Endothelial cell of umbilical vein (primary cell): ENCODE measurements at regions of chr2 and their contacts with region 1.

Region 1: DNA sequence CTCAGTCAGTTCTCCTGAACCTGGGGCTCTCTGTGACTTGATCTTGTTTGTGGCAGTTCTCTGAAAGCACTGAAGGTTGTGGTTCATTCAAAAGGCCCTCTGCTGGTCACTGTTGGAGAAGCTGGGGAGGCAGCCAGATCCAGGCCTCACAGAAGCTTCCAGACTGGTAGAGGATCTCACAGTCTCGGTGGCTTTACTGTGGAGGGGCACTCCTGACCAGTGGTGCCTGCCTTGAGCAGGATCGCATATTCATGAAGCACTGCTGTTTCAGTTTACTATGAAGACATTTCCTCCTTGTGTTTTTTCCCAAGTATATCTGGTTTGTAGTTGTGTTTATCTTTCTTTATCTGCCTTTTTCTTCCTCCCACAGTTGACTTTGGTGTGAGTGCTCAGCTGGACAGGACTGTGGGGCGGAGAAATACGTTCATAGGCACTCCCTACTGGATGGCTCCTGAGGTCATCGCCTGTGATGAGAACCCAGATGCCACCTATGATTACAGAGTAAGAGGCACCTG is 133.9 kb downstream of the MAP4K4 start:
- DNase-seq: peak; percentile 85
- H3K4me3 ChIP-seq: no peak overlapping the region
- H3K27ac ChIP-seq: peak overlapping the region; percentile 18
- H3K4me1 ChIP-seq: peaks cover 33% of the 10 kb centered on the region
- H3K27me3 ChIP-seq: no peaks in the 10 kb centered on the region
- CTCF ChIP-seq: peak; percentile 68 to 74
- POLR2A ChIP-seq: no peak

Region 2: DNA sequence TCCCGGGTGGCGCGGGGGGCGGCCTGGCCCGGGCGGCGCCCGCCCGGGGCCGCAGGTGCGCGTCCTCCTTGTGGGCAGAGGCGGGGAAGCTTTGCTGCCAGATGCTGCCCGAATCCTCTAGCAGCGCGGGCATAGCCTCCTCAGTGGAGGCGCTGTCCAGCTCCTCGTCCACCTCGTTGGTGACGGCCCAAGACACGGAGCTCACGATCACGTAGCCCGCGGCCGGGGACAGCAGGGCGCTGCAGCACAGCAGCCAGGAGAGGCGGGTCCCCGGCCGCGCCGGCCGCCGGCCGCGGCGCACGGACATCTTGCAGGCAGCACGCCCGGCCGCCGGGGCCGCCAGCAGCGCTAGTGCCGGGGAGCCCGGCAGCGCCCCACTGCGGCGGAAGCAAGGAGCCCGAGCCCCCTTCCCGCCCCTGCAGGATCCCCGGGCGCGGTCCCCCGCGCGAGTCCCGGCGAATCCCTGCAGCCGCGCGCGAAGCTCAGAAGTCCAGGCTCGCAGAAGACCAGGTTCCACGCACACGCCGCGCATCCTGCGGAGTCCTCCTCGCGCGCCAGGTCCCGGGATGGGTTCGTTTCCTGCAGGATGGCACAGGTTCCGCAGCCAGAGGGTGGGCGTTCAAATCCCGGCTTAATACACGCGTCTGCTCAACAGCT is 444.1 kb before region 1 on chr2 and contains the start of gene CREG2:
- CTCF ChIA-PET with region 1: interaction called, 13 read pairs
- POLR2A ChIA-PET with region 1: no interaction called
- dilution Hi-C with region 1: no loop called
- intact Hi-C with region 1: no loop called
- DNase-seq: peak; percentile 74
- H3K4me3 ChIP-seq: peak within 1 kb of the TSS; percentile 32 to 54 (median 43)
- H3K27ac ChIP-seq: no peak within 1 kb of the TSS
- H3K4me1 ChIP-seq: peaks cover 19% of the 10 kb centered on the region
- H3K27me3 ChIP-seq: peaks cover 36 to 46% of the 10 kb centered on the region in 2 experiments
- CTCF ChIP-seq: peak; percentile 53 to 61
- POLR2A ChIP-seq: no peak
- total RNA-seq, gene CREG2: 0.88 and 2.0 TPM in 2 replicates

Region 3: GRCh38 chr2:101518578-101519492 is 312.6 kb before region 1 on chr2:
- CTCF ChIA-PET with region 1: interaction called, 21 read pairs
- POLR2A ChIA-PET with region 1: no interaction called
- dilution Hi-C with region 1: no loop called
- intact Hi-C with region 1: loop called (anchors 1 kb)
- DNase-seq: peak; percentile 61
- H3K4me3 ChIP-seq: no peak overlapping the region
- H3K27ac ChIP-seq: peak overlapping the region; percentile 94
- H3K4me1 ChIP-seq: peaks cover 57% of the 10 kb centered on the region
- H3K27me3 ChIP-seq: no peaks in the 10 kb centered on the region
- CTCF ChIP-seq: peak; percentile 18 to 49
- POLR2A ChIP-seq: no peak

Region 4: GRCh38 chr2:101717071-101717845 is 114.2 kb before region 1 on chr2:
- CTCF ChIA-PET with region 1: interaction called, 13 read pairs
- POLR2A ChIA-PET with region 1: no interaction called
- dilution Hi-C with region 1: no loop called
- intact Hi-C with region 1: no loop called
- DNase-seq: no peak
- H3K4me3 ChIP-seq: no peak overlapping the region
- H3K27ac ChIP-seq: no peak overlapping the region
- H3K4me1 ChIP-seq: peaks cover 7% of the 10 kb centered on the region
- H3K27me3 ChIP-seq: no peaks in the 10 kb centered on the region
- CTCF ChIP-seq: no peak
- POLR2A ChIP-seq: no peak

Region 5: DNA sequence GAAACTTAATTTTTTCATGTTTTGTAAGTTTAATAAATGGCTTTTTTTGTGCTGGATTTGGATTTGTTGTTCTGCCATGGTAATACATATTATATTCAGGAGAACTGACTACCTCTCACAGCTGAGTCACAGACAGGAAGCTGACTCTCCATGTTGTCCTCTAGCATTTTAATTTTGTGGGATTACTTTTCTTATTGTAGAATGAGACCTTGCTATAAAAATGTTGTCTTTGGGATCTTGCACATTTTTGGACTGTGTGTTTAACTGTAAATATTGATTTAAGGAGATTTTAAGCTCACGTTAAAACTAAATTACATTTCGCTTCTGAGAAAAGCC is 85.1 kb before region 1 on chr2:
- CTCF ChIA-PET with region 1: interaction called, 13 read pairs
- POLR2A ChIA-PET with region 1: no interaction called
- dilution Hi-C with region 1: no loop called
- intact Hi-C with region 1: no loop called
- DNase-seq: peak; percentile 87
- H3K4me3 ChIP-seq: peak overlapping the region in 1 of 3 experiments; percentile 26
- H3K27ac ChIP-seq: peak overlapping the region; percentile 88
- H3K4me1 ChIP-seq: peaks cover 45% of the 10 kb centered on the region
- H3K27me3 ChIP-seq: no peaks in the 10 kb centered on the region
- CTCF ChIP-seq: no peak
- POLR2A ChIP-seq: no peak

Region 6: DNA sequence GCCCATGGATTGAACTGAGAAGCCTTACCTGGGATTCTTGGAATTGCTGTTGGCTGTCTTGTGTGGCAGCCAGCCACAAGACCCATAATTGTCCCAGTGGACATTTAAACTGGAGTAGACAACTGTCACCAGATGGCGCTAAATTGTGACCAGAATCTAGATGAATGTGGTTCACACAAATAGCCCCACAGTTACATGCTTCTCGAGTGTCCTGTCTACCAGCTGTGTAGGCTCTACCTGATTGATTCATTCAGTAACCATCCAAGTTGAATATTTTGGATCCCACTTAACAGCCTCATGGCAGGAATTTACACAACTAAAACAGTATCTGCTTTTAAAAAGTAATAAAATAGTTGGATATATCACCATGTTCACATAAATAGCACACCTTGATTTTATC is 60.7 kb before region 1 on chr2:
- CTCF ChIA-PET with region 1: interaction called, 90 read pairs
- POLR2A ChIA-PET with region 1: no interaction called
- dilution Hi-C with region 1: no loop called
- intact Hi-C with region 1: loop called (anchors 2 kb)
- DNase-seq: peak; percentile 58
- H3K4me3 ChIP-seq: no peak overlapping the region
- H3K27ac ChIP-seq: peak overlapping the region; percentile 5
- H3K4me1 ChIP-seq: peaks cover 68% of the 10 kb centered on the region
- H3K27me3 ChIP-seq: no peaks in the 10 kb centered on the region
- CTCF ChIP-seq: peak in 1 of 2 donors; percentile 28
- POLR2A ChIP-seq: no peak

Region 7: DNA sequence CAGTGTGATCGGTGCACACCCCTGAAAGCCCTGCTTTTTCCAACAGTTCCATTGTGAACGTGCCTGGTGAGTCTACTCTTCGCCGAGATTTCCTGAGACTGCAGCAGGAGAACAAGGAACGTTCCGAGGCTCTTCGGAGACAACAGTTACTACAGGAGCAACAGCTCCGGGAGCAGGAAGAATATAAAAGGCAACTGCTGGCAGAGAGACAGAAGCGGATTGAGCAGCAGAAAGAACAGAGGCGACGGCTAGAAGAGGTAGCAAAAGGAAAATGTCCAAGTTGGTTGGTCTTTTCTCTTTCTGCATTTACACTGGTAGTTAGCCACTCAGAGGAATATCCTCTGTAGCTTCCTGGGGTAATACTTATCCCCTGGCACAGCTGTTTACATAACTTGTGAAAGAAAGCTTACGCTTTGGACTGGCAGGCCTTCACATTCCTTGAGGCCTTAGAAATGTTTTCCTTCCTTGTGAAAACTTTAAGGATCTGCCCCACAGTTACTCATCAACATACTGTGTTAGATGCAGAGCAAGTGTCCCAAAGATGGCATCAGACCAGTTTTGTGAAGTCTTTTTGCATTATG is 12.7 kb after region 1 on chr2:
- CTCF ChIA-PET with region 1: interaction called, 12 read pairs
- POLR2A ChIA-PET with region 1: no interaction called
- dilution Hi-C with region 1: no loop called
- intact Hi-C with region 1: no loop called
- DNase-seq: peak; percentile 81
- H3K4me3 ChIP-seq: no peak overlapping the region
- H3K27ac ChIP-seq: peak overlapping the region; percentile 85
- H3K4me1 ChIP-seq: peaks cover 33% of the 10 kb centered on the region
- H3K27me3 ChIP-seq: no peaks in the 10 kb centered on the region
- CTCF ChIP-seq: no peak
- POLR2A ChIP-seq: no peak